ENCODE measurements at regions of chr12 and their contacts with region 1.

Region 1: GRCh38 chr12:52980693-52981423 is 25.4 kb upstream of the EIF4B start:
- DNase-seq: peak; percentile 49
- ATAC-seq: peak; percentile 90
- H3K4me3 Mint-ChIP-seq: no peak overlapping the region
- H3K27ac Mint-ChIP-seq: no peak overlapping the region
- H3K4me1 Mint-ChIP-seq: no peaks in the 10 kb centered on the region
- H3K27me3 Mint-ChIP-seq: peaks cover 41% of the 10 kb centered on the region
- CTCF ChIP-seq: peak; percentile 76

Region 2: GRCh38 chr12:52156736-52157565 is 823.9 kb before region 1 on chr12:
- CTCF ChIA-PET with region 1: no interaction called
- POLR2A ChIA-PET with region 1: no interaction called
- intact Hi-C with region 1: loop called (anchors 2 kb)
- DNase-seq: peak; percentile 56
- ATAC-seq: peak; percentile 69
- H3K4me3 Mint-ChIP-seq: no peak overlapping the region
- H3K27ac Mint-ChIP-seq: no peak overlapping the region
- H3K4me1 Mint-ChIP-seq: no peaks in the 10 kb centered on the region
- H3K27me3 Mint-ChIP-seq: peaks cover 14% of the 10 kb centered on the region
- CTCF ChIP-seq: no peak

Region 3: DNA sequence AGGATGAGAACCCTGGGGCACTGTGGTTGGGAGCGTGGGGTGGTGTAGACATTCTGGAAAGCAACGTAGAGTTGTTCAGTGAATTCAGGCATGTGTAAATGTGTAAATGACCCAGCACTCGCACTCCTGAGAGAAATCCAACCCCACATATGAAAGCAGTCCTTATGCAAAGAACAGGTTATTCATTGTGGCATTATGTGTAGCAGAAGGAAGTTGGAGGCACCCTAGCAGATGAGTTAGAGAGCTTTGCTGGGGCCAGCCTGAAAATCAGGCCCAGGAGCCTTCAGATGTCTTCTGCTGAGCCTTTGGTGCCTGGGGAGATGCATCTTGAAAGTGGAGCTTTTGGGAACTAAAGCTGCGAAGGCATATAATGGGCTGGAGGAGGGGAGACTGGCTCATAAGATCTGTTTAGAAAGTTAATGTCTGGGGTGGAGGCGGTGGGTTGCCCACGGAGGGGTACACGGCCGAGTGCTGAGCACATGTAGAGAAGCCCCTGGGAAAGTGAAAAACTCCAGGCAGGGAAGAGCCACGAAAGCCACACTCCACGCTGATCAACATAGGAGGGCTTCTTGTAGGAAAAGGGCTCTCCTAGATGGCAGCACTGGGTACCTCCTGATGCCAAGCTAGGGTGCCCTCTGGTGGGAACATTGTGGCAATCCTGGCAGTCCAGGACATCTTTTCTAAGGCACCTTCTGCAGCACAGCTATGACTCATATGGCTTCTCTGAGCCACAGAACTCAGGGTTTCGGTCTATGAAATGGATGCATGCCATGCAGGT is 653.6 kb before region 1 on chr12:
- CTCF ChIA-PET with region 1: interaction called, 4 read pairs
- POLR2A ChIA-PET with region 1: no interaction called
- intact Hi-C with region 1: loop called (anchors 1 kb)
- DNase-seq: peak; percentile 34
- ATAC-seq: peak; percentile 97
- H3K4me3 Mint-ChIP-seq: no peak overlapping the region
- H3K27ac Mint-ChIP-seq: no peak overlapping the region
- H3K4me1 Mint-ChIP-seq: peaks cover 1% of the 10 kb centered on the region
- H3K27me3 Mint-ChIP-seq: peaks cover 16% of the 10 kb centered on the region
- CTCF ChIP-seq: no peak

Region 4: DNA sequence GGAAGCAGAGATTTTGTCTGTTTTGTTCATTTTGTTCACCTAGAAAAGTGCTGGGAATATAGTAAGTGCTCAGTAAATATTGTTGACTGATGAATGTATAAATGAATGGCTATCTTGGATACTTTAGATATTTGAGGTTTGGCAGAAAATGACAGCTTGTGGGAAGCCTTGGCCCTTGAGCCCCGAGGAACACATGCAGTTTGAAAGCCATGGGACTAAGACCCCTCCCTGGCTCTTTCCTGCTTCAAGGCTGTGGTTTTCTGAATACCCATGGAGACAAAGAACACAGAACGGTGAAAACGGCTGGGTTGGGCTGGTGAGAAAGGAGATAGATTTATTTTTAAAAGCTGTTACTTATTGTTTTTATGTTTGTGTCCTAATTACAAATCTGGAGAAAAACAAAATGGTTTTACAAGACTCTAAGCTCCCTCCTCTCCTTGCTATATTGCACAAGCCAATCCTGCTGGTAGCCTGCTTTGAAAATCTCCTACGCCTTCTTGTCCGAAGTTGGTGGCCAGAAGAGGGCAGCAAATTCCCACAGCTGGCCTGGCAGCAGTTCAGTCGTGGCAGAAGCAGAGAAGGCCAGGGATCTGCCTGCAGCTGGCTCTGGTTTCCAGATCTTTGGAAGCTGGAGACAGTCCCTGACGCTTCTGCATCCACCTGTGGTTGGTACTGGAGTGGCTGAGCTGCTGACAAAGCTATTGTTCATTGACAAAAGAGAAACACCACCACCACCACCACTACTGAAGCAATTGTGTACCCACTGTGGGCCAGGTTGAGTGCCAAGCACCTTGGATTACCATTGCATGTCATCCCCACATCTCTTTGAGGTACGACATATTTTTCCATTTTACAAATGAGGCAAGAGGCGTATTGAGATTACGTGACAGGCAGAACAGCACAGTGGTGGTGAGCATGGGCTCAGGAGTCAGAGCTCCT is 608.4 kb before region 1 on chr12:
- CTCF ChIA-PET with region 1: interaction called, 4 read pairs
- POLR2A ChIA-PET with region 1: no interaction called
- intact Hi-C with region 1: loop called (anchors 1 kb)
- DNase-seq: no peak
- ATAC-seq: peak; percentile 25
- H3K4me3 Mint-ChIP-seq: no peak overlapping the region
- H3K27ac Mint-ChIP-seq: no peak overlapping the region
- H3K4me1 Mint-ChIP-seq: no peaks in the 10 kb centered on the region
- H3K27me3 Mint-ChIP-seq: peaks cover 23% of the 10 kb centered on the region
- CTCF ChIP-seq: no peak

Region 5: GRCh38 chr12:52582971-52583456 is 397.8 kb before region 1 on chr12:
- CTCF ChIA-PET with region 1: interaction called, 5 read pairs
- POLR2A ChIA-PET with region 1: no interaction called
- intact Hi-C with region 1: loop called (anchors 1 kb)
- DNase-seq: no peak
- ATAC-seq: no peak
- H3K4me3 Mint-ChIP-seq: no peak overlapping the region
- H3K27ac Mint-ChIP-seq: no peak overlapping the region
- H3K4me1 Mint-ChIP-seq: no peaks in the 10 kb centered on the region
- H3K27me3 Mint-ChIP-seq: peaks cover 4% of the 10 kb centered on the region
- CTCF ChIP-seq: no peak

Region 6: DNA sequence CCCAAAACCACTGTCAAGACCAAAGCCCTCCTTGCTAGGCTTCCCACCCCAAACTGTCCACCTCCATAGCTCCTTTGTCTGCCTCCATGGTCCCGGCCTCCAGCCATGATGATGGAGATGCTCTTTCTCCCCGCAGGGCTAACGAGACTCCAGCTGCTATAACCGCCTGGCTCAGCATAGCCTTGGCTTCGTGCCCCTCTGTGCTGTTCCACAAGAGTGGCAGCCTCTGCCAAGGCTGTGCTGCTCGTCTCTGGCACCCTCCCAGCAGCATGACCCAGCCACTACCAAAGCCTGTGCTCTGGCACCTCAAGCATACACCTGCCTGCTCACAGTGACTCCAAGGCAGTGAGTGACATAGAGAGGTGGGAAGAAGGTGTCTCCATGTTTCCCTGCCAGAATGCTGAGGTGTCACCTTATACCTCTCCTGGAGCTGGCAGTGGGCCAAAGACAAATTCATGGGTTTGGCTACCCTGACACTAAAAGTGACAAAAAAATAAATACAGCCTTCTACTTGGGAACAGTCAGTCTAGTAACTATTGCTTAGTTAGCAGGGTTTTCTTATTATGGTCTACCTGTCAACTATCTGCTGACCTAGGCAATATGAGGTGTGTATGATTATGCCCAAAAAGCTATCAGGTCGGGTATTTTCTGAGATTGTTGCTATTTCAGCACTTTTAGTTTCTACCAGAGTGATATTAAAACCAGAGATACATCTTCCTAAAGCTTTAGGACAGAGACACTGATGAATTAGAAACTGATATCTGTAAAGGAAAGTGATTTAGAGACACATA is 346.4 kb before region 1 on chr12:
- CTCF ChIA-PET with region 1: no interaction called
- POLR2A ChIA-PET with region 1: no interaction called
- intact Hi-C with region 1: no loop called
- DNase-seq: no peak
- ATAC-seq: no peak
- H3K4me3 Mint-ChIP-seq: no peak overlapping the region
- H3K27ac Mint-ChIP-seq: no peak overlapping the region
- H3K4me1 Mint-ChIP-seq: no peaks in the 10 kb centered on the region
- H3K27me3 Mint-ChIP-seq: peaks cover 11% of the 10 kb centered on the region
- CTCF ChIP-seq: no peak

Region 7: GRCh38 chr12:52879394-52880351 is 101.2 kb before region 1 on chr12:
- CTCF ChIA-PET with region 1: interaction called, 154 read pairs
- POLR2A ChIA-PET with region 1: no interaction called
- intact Hi-C with region 1: no loop called
- DNase-seq: peak; percentile 49
- ATAC-seq: peak; percentile 90
- H3K4me3 Mint-ChIP-seq: peak overlapping the region; percentile 56
- H3K27ac Mint-ChIP-seq: no peak overlapping the region
- H3K4me1 Mint-ChIP-seq: peaks cover 7% of the 10 kb centered on the region
- H3K27me3 Mint-ChIP-seq: peaks cover 19% of the 10 kb centered on the region
- CTCF ChIP-seq: peak; percentile 28

Region 8: GRCh38 chr12:52884526-52885293 is 96.1 kb before region 1 on chr12:
- CTCF ChIA-PET with region 1: interaction called, 154 read pairs
- POLR2A ChIA-PET with region 1: no interaction called
- intact Hi-C with region 1: loop called (anchors 1 kb)
- DNase-seq: peak; percentile 66
- ATAC-seq: peak; percentile 83
- H3K4me3 Mint-ChIP-seq: no peak overlapping the region
- H3K27ac Mint-ChIP-seq: no peak overlapping the region
- H3K4me1 Mint-ChIP-seq: peaks cover 5% of the 10 kb centered on the region
- H3K27me3 Mint-ChIP-seq: peaks cover 31% of the 10 kb centered on the region
- CTCF ChIP-seq: peak; percentile 69

Region 9: DNA sequence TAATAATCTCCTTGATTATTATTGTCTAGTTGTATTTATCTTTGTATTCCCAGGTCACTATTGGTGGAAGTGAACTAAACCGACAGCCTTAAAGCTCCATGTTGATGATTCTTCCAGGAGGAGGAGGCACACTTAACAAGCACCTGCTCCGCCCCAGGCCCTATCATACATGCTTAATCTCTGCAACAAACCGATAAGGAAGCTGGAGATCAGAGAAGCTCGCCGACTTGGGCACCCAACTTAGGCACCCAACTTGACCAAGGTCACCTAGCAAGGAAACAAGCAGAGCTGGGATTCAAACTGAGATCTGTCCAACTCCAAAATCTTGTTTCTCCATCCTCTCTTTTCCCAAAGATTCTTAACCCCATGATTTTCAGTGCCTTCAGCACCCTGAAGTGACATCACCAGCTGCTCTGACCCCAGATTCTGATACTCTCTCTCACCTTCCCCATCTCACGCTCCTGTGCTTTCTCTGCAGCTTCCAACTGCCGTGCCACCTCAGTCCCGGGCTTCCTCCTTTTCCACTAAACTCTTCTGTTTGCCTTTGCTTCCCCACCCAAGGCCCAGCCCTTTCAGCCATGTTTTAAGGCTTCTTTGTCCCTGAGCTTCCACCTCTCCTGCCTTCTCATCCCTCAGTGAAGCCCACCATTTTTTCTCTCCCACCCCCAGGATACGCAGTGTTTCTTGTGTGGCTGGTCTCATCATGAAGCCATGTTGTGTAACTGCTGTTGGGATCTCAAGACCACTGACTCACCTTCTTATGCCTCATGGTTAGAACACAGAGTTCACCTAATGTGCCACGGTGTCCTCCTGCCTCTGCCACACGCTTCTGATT is 38.6 kb before region 1 on chr12:
- CTCF ChIA-PET with region 1: no interaction called
- POLR2A ChIA-PET with region 1: no interaction called
- intact Hi-C with region 1: no loop called
- DNase-seq: no peak
- ATAC-seq: no peak
- H3K4me3 Mint-ChIP-seq: no peak overlapping the region
- H3K27ac Mint-ChIP-seq: no peak overlapping the region
- H3K4me1 Mint-ChIP-seq: no peaks in the 10 kb centered on the region
- H3K27me3 Mint-ChIP-seq: peaks cover 17% of the 10 kb centered on the region
- CTCF ChIP-seq: no peak

Measured in activated B cell treated with CpG ODN at 0.5 μM for 24 hours (primary cell).